Gastrocnemius medialis (tissue), 4 donors: ENCODE measurements at regions of chr22 and their contacts with region 1.

Region 1: GRCh38 chr22:20495861-20496681 is 476 bp upstream of the KLHL22 start:
- DNase-seq: peak; percentile 88 to 89
- ATAC-seq: peak; percentile 84
- H3K4me3 ChIP-seq: peak overlapping the region; percentile 63 to 74 (median 72)
- H3K27ac ChIP-seq: peak overlapping the region; percentile 92 to 96 (median 96)
- H3K4me1 ChIP-seq: peaks cover 10 to 16% of the 10 kb centered on the region in 2 donors
- H3K27me3 ChIP-seq: no peaks in the 10 kb centered on the region
- CTCF ChIP-seq: peak in 4 of 5 experiments; percentile 88 to 92 (median 90)
- POLR2A ChIP-seq: peak; percentile 90 to 96

Region 2: GRCh38 chr22:19891317-19892256 is 604.5 kb before region 1 on chr22:
- in situ Hi-C with region 1: no loop called
- intact Hi-C with region 1: no loop called
- DNase-seq: no peak
- ATAC-seq: no peak
- H3K4me3 ChIP-seq: no peak overlapping the region
- H3K27ac ChIP-seq: no peak overlapping the region
- H3K4me1 ChIP-seq: peaks cover 0 to 2% of the 10 kb centered on the region in 2 donors
- H3K27me3 ChIP-seq: no peaks in the 10 kb centered on the region
- CTCF ChIP-seq: no peak
- POLR2A ChIP-seq: no peak

Region 3: GRCh38 chr22:20319745-20320658 is 176.1 kb before region 1 on chr22 and contains the start of gene DGCR6L:
- in situ Hi-C with region 1: no loop called
- intact Hi-C with region 1: loop called (anchors 10 kb)
- DNase-seq: peak; percentile 91 to 93
- ATAC-seq: peak; percentile 86 to 89
- H3K4me3 ChIP-seq: peak within 1 kb of the TSS; percentile 92 to 95 (median 93)
- H3K27ac ChIP-seq: peak within 1 kb of the TSS; percentile 96 to 99 (median 97)
- H3K4me1 ChIP-seq: peaks cover 21 to 33% of the 10 kb centered on the region in 2 donors
- H3K27me3 ChIP-seq: no peaks in the 10 kb centered on the region
- CTCF ChIP-seq: peak in 1 of 5 experiments; percentile 7
- POLR2A ChIP-seq: peak; percentile 90
- total RNA-seq, gene DGCR6L: 43.5 to 105 (median 67.5) TPM

Region 4: GRCh38 chr22:20430720-20431510 is 65.2 kb before region 1 on chr22:
- in situ Hi-C with region 1: no loop called
- intact Hi-C with region 1: loop called (anchors 1 kb)
- DNase-seq: peak in 1 of 2 donors; percentile 34
- ATAC-seq: peak; percentile 59 to 77
- H3K4me3 ChIP-seq: peak overlapping the region; percentile 25 to 50 (median 37)
- H3K27ac ChIP-seq: no peak overlapping the region
- H3K4me1 ChIP-seq: peaks cover 0 to 6% of the 10 kb centered on the region in 2 donors
- H3K27me3 ChIP-seq: peaks cover 6 to 13% (median 12%) of the 10 kb centered on the region in 3 donors
- CTCF ChIP-seq: peak; percentile 19 to 61 (median 47)
- POLR2A ChIP-seq: no peak

Region 5: GRCh38 chr22:20568989-20569769 is 73.1 kb after region 1 on chr22:
- in situ Hi-C with region 1: loop called in 1 of 4 experiments (anchors 10 kb)
- intact Hi-C with region 1: loop called (anchors 2 kb)
- DNase-seq: peak; percentile 81 to 88
- ATAC-seq: peak; percentile 89 to 93
- H3K4me3 ChIP-seq: no peak overlapping the region
- H3K27ac ChIP-seq: peak overlapping the region; percentile 69 to 87 (median 78)
- H3K4me1 ChIP-seq: peaks cover 12 to 20% of the 10 kb centered on the region in 2 donors
- H3K27me3 ChIP-seq: no peaks in the 10 kb centered on the region
- CTCF ChIP-seq: no peak
- POLR2A ChIP-seq: no peak

Region 6: DNA sequence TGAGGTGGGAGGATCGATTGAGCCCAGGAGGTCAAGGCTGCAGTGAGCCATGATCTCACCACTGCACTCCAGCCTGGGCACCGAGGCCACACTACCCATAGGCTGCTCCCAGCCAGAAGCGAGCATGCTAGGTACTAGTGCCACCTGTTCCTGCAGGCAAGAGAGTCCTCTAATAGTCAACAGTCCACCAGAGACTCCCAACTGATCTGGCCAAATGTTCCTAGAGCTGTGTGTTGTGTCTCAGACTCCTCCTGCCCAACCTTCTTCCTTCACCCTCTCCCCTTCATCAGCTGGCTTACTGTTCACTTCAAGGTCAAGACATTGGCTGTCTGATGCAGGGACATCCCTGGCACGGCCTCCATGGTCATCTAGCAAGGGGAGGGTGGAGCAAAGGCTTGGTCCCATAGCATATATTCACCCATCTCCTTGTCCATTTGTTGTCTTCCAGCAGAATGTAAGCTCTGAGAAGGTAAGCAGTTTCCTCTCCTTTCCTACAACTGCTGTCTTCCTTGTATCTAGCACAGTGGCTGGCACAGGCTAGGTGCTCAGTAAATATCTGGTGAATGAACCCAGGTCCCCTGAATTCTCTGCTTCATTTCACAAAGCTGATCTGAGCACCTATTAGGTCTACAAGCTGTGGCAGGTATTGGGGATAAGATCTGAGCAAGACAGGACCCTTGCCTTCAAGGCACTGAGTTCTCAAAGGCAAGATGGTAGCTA is 151.7 kb after region 1 on chr22:
- in situ Hi-C with region 1: no loop called
- intact Hi-C with region 1: no loop called
- DNase-seq: no peak
- ATAC-seq: no peak
- H3K4me3 ChIP-seq: no peak overlapping the region
- H3K27ac ChIP-seq: no peak overlapping the region
- H3K4me1 ChIP-seq: no peaks in the 10 kb centered on the region
- H3K27me3 ChIP-seq: no peaks in the 10 kb centered on the region
- CTCF ChIP-seq: no peak
- POLR2A ChIP-seq: no peak